ENCODE measurements at regions of chr4 and their contacts with region 1.

Region 1: GRCh38 chr4:54941994-54942552 is 183.3 kb downstream of the KDR start:
- DNase-seq: no peak
- CTCF ChIP-seq: no peak

Region 2: GRCh38 chr4:54683616-54684346 is 258.3 kb before region 1 on chr4:
- in situ Hi-C with region 1: loop called (anchors 25 kb)
- DNase-seq: peak; percentile 56
- CTCF ChIP-seq: peak; percentile 52